Activated CD4-positive, alpha-beta T cell treated with anti-CD3 and anti-CD28 coated beads, Interleukin-2, amount 10 ng/mL, durations not matched to agents 24 days and 14 days (primary cell): ENCODE measurements at regions of chr14 and their contacts with region 1.

Region 1: DNA sequence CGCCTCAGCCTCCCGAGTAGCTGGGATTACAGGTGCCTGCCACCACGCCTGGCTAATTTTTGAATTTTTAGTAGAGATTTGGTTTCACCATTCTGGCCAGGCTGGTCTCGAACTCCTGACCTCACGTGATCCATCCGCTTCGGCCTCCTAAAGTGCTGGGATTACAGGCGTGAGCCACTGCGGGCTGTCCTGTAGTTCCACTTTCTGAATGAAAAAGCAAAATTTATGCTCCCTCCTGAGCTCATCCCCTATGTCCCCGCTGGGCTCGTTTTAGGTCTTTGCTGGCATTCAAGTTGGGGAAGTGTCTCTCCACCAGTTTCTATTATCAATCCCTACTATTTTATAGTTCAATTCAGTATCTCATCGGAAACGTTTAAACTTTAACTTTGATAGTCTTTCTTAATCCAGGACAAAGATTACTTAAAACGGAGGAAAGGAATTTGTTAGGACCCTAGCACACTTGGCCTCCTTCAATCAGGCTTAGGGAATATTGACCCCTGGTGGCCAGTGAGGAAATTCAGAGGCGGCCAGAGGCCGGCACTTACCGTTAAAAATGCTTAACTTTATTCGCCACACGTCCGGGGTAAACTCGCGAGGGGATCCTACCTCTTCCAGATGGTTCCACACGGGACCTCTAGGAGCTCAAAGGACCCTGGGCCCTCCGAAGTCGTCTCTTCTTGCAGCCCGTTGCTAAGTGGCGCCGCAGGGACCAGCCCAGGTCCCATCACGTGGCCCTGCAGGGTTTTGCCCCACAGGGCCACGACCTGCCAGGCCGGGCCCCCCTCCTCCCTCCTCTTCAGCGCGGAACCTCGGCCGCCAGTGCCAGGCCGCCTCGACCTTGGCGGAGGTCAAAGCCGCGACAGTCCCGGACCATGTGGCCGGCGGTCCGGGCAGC is 11.4 kb upstream of the DNAL1 start:
- DNase-seq: peak; percentile 87
- H3K4me3 Mint-ChIP-seq: peak overlapping the region; percentile 76
- H3K27ac Mint-ChIP-seq: peak overlapping the region; percentile 41
- H3K4me1 Mint-ChIP-seq: peaks cover 4% of the 10 kb centered on the region
- H3K27me3 Mint-ChIP-seq: peaks cover 26% of the 10 kb centered on the region

Region 2: GRCh38 chr14:73295198-73295796 is 338.1 kb before region 1 on chr14:
- intact Hi-C with region 1: loop called (anchors 10 kb)
- DNase-seq: peak; percentile 64
- H3K4me3 Mint-ChIP-seq: no peak overlapping the region
- H3K27ac Mint-ChIP-seq: no peak overlapping the region
- H3K4me1 Mint-ChIP-seq: peaks cover 24% of the 10 kb centered on the region
- H3K27me3 Mint-ChIP-seq: no peaks in the 10 kb centered on the region

Region 3: GRCh38 chr14:73381380-73382013 is 251.9 kb before region 1 on chr14:
- intact Hi-C with region 1: no loop called
- DNase-seq: no peak
- H3K4me3 Mint-ChIP-seq: no peak overlapping the region
- H3K27ac Mint-ChIP-seq: no peak overlapping the region
- H3K4me1 Mint-ChIP-seq: peaks cover 1% of the 10 kb centered on the region
- H3K27me3 Mint-ChIP-seq: no peaks in the 10 kb centered on the region

Region 4: GRCh38 chr14:73503648-73504047 is 129.7 kb before region 1 on chr14:
- intact Hi-C with region 1: loop called (anchors 1 kb)
- DNase-seq: no peak
- H3K4me3 Mint-ChIP-seq: no peak overlapping the region
- H3K27ac Mint-ChIP-seq: no peak overlapping the region
- H3K4me1 Mint-ChIP-seq: no peaks in the 10 kb centered on the region
- H3K27me3 Mint-ChIP-seq: no peaks in the 10 kb centered on the region